Endothelial cell of umbilical vein (primary cell): ENCODE measurements at regions of chr4 and their contacts with region 1.

Region 1: GRCh38 chr4:47836641-47837093 is 1.2 kb downstream of the CORIN start:
- DNase-seq: peak; percentile 56
- H3K4me3 ChIP-seq: peak overlapping the region; percentile 15 to 57 (median 16)
- H3K27ac ChIP-seq: no peak overlapping the region
- H3K4me1 ChIP-seq: peaks cover 18% of the 10 kb centered on the region
- H3K27me3 ChIP-seq: peaks cover 2 to 8% of the 10 kb centered on the region in 2 experiments
- CTCF ChIP-seq: peak; percentile 53 to 74
- POLR2A ChIP-seq: no peak

Region 2: GRCh38 chr4:47485047-47485692 is 351.5 kb before region 1 on chr4 and contains the start of gene ATP10D:
- CTCF ChIA-PET with region 1: no interaction called
- POLR2A ChIA-PET with region 1: no interaction called
- dilution Hi-C with region 1: no loop called
- intact Hi-C with region 1: loop called (anchors 10 kb)
- DNase-seq: peak; percentile 95
- H3K4me3 ChIP-seq: peak within 1 kb of the TSS; percentile 75 to 83 (median 79)
- H3K27ac ChIP-seq: peak within 1 kb of the TSS; percentile 77
- H3K4me1 ChIP-seq: peaks cover 2% of the 10 kb centered on the region
- H3K27me3 ChIP-seq: no peaks in the 10 kb centered on the region
- CTCF ChIP-seq: no peak
- POLR2A ChIP-seq: peak; percentile 94
- total RNA-seq, gene ATP10D: 30.9 and 34.1 TPM in 2 replicates

Region 3: DNA sequence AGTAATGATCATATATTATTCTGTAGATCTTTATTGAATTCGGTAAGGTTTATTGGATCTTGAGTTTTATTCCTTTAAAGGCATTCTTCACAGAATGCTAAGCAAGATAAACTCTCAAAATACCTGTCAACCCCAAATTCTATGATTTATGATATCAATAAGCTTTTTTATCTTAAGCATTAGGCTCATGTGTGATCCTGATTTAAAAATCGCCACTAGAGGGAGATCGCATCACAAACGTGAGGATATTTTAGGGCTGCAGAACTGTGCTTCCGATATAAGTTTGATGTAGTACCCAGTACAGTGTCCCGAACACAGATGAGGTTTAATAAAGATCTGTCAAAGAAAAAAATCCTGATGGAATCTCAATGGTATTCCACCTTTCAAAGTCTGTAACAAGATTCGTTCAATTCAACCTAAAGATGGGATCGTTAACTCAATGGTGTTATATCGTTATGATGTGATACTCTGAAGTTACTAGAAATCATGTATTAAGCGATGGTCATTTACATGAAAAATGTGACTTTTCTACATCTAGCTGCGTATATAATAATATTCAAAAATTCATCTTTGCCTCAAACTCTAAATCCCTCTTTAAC is 167.8 kb before region 1 on chr4:
- CTCF ChIA-PET with region 1: interaction called, 37 read pairs
- POLR2A ChIA-PET with region 1: no interaction called
- dilution Hi-C with region 1: no loop called
- intact Hi-C with region 1: loop called (anchors 1 kb)
- DNase-seq: peak; percentile 56
- H3K4me3 ChIP-seq: no peak overlapping the region
- H3K27ac ChIP-seq: no peak overlapping the region
- H3K4me1 ChIP-seq: no peaks in the 10 kb centered on the region
- H3K27me3 ChIP-seq: peaks cover 9 to 10% of the 10 kb centered on the region in 2 experiments
- CTCF ChIP-seq: peak; percentile 27 to 50
- POLR2A ChIP-seq: no peak

Region 4: GRCh38 chr4:47704693-47705325 is 131.9 kb before region 1 on chr4:
- CTCF ChIA-PET with region 1: interaction called, 25 read pairs
- POLR2A ChIA-PET with region 1: no interaction called
- dilution Hi-C with region 1: no loop called
- intact Hi-C with region 1: loop called (anchors 1 kb)
- DNase-seq: peak; percentile 22
- H3K4me3 ChIP-seq: no peak overlapping the region
- H3K27ac ChIP-seq: no peak overlapping the region
- H3K4me1 ChIP-seq: peaks cover 11% of the 10 kb centered on the region
- H3K27me3 ChIP-seq: peaks cover 0 to 6% of the 10 kb centered on the region in 2 experiments
- CTCF ChIP-seq: peak; percentile 14 to 33
- POLR2A ChIP-seq: no peak

Region 5: GRCh38 chr4:47891928-47892327 is 55.3 kb after region 1 on chr4:
- CTCF ChIA-PET with region 1: no interaction called
- POLR2A ChIA-PET with region 1: no interaction called
- dilution Hi-C with region 1: no loop called
- intact Hi-C with region 1: no loop called
- DNase-seq: no peak
- H3K4me3 ChIP-seq: no peak overlapping the region
- H3K27ac ChIP-seq: no peak overlapping the region
- H3K4me1 ChIP-seq: no peaks in the 10 kb centered on the region
- H3K27me3 ChIP-seq: no peaks in the 10 kb centered on the region
- CTCF ChIP-seq: no peak
- POLR2A ChIP-seq: no peak

Region 6: GRCh38 chr4:47914220-47914925 is 77.7 kb after region 1 on chr4 and contains the start of gene NFXL1:
- CTCF ChIA-PET with region 1: interaction called, 5 read pairs
- POLR2A ChIA-PET with region 1: no interaction called
- dilution Hi-C with region 1: no loop called
- intact Hi-C with region 1: loop called (anchors 5 kb)
- DNase-seq: peak; percentile 97
- H3K4me3 ChIP-seq: peak within 1 kb of the TSS; percentile 73 to 93 (median 83)
- H3K27ac ChIP-seq: peak within 1 kb of the TSS; percentile 54
- H3K4me1 ChIP-seq: peaks cover 17% of the 10 kb centered on the region
- H3K27me3 ChIP-seq: no peaks in the 10 kb centered on the region
- CTCF ChIP-seq: no peak
- POLR2A ChIP-seq: peak; percentile 93
- total RNA-seq, gene NFXL1: 11.8 and 14.6 TPM in 2 replicates

Region 7: DNA sequence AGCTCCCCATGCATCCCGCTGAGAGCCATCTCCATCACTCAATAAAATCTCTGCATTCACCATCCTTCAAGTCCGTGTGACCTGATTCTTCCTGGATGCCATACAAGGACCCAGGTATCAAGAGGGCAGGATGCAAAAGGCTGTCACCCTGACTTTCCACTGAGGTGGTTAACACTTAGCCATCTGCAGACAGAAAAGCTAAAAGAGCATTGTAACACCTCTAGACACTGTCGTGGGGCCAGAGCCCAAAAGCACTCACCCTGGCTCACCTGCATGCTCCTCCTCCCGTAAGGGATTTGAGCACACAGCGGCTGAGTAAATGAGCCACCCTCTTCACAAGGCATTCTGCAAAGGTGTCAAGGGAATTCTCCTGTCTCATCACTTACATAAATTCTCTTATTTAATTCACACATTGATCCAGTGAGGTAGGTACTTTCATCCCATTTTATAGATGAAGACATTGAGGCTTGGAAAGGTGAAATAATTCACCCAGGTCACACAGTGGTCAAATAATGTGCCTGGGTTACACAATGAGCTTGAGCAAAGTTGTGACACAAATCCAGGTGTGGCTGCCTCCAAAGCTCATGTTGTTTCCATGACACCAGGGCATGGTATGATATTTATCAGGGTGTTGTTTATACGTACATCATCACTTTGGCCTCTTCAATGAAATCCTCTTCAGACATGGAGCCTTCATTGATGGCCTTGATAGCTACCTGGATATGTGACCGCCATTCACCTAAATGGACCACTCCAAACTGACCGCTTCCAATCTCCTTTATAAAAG is 249.3 kb after region 1 on chr4:
- CTCF ChIA-PET with region 1: interaction called, 5 read pairs
- POLR2A ChIA-PET with region 1: no interaction called
- dilution Hi-C with region 1: no loop called
- intact Hi-C with region 1: loop called (anchors 2 kb)
- DNase-seq: no peak
- H3K4me3 ChIP-seq: no peak overlapping the region
- H3K27ac ChIP-seq: no peak overlapping the region
- H3K4me1 ChIP-seq: peaks cover 7% of the 10 kb centered on the region
- H3K27me3 ChIP-seq: no peaks in the 10 kb centered on the region
- CTCF ChIP-seq: no peak
- POLR2A ChIP-seq: no peak